Tibial artery (tissue), 4 donors: ENCODE measurements at regions of chr1 and their contacts with region 1.

Region 1: DNA sequence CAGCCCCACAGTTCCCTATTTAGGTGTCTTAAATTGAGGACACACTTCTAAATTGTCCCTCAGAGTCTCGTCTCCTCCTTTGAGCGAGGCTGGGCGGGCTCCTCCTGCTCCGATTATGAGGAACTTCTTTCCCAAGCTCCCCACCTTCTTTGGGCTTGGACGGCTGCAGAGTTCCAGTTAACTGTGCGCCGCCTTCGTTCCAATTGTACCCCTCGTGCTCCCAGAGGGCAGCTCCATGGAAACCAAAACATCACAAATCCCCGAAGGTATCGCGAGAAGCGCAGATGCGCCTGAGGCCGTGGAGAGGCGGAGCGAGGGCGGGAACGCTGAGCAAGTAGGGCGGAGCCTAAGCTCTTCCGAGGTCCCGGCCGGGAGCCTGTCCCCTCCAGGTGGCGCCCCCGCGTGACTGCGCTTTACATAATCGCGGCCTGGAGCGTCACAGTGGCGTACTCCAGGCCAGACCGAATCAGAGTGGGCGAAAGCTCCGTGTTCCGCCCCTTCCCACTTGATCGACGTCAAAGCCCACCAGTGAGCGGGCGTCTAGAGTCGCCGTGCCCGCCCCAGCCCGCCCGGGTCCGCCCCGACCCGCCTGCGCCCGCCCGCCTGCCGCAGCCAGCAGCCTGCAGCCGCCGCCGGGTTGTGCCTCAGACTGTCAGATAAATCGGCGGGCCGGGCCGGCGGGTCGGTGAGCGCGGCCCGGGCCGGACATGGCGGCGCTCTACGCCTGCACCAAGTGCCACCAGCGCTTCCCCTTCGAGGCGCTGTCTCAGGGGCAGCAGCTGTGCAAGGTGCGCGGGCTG is at the start of gene FAM76A:
- DNase-seq: peak; percentile 99 to 100
- H3K4me3 ChIP-seq: peak within 1 kb of the TSS; percentile 94 to 99
- H3K27ac ChIP-seq: peak within 1 kb of the TSS; percentile 93 to 97
- H3K4me1 ChIP-seq: peaks cover 5 to 14% (median 12%) of the 10 kb centered on the region in 4 donors
- H3K27me3 ChIP-seq: no peaks in the 10 kb centered on the region
- CTCF ChIP-seq: peak; percentile 18 to 42

Region 2: DNA sequence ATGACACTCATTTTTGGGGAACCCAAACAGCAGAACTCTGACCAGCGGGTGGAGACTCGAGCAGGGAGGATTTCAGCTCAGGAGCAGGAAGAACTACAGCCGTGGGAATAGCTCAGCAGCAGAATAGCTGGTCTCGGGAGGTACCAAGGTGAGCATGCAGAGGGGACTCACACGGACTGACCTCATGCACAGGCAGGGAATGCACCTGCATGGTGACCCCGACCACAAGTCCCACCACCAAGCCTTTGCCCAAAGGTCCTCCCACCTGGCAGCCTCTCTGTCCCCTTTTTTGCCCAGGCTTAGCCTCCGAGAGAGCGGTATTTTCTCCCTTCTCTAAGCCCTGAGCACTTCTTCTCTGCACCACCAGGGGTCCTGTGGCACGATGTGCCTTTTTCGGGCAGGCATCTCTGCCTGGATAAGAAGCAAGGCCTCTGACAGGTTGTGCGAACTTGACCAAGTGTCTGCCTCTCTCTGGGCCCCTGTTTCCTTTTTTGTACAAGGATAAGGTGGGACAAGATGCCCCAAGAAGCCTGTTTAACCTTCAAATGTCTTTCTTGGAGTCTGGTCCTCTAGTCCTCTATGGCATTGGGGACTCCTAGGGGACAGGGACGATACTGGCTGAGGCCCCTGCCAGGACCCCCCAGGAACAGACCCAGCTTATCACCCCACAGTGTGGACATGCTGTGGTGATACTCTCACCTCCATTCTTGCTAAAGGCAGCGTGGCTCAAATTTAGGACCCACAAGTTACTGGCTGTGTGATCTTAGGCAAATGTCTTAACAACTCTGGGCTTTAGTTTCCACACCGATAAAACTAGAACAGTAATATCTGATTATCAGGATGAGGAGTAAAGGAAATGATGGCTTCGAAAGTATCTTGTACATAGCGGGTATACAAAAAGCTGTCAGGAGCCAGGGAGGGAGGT is 81.6 kb before region 1 on chr1:
- intact Hi-C with region 1: no loop called
- DNase-seq: peak in 1 of 2 donors; percentile 54
- H3K4me3 ChIP-seq: no peak overlapping the region
- H3K27ac ChIP-seq: no peak overlapping the region
- H3K4me1 ChIP-seq: peaks cover 0 to 15% (median 6%) of the 10 kb centered on the region in 4 donors
- H3K27me3 ChIP-seq: no peaks in the 10 kb centered on the region
- CTCF ChIP-seq: peak; percentile 78 to 83

Region 3: GRCh38 chr1:27671964-27672749 is 53.4 kb before region 1 on chr1 and contains the start of gene IFI6:
- intact Hi-C with region 1: loop called (anchors 5 kb)
- DNase-seq: peak; percentile 90 to 95
- H3K4me3 ChIP-seq: peak within 1 kb of the TSS; percentile 48 to 61
- H3K27ac ChIP-seq: peak within 1 kb of the TSS; percentile 78 to 81
- H3K4me1 ChIP-seq: peaks cover 0 to 33% (median 17%) of the 10 kb centered on the region in 4 donors
- H3K27me3 ChIP-seq: no peaks in the 10 kb centered on the region
- CTCF ChIP-seq: peak; percentile 48 to 59

Region 4: DNA sequence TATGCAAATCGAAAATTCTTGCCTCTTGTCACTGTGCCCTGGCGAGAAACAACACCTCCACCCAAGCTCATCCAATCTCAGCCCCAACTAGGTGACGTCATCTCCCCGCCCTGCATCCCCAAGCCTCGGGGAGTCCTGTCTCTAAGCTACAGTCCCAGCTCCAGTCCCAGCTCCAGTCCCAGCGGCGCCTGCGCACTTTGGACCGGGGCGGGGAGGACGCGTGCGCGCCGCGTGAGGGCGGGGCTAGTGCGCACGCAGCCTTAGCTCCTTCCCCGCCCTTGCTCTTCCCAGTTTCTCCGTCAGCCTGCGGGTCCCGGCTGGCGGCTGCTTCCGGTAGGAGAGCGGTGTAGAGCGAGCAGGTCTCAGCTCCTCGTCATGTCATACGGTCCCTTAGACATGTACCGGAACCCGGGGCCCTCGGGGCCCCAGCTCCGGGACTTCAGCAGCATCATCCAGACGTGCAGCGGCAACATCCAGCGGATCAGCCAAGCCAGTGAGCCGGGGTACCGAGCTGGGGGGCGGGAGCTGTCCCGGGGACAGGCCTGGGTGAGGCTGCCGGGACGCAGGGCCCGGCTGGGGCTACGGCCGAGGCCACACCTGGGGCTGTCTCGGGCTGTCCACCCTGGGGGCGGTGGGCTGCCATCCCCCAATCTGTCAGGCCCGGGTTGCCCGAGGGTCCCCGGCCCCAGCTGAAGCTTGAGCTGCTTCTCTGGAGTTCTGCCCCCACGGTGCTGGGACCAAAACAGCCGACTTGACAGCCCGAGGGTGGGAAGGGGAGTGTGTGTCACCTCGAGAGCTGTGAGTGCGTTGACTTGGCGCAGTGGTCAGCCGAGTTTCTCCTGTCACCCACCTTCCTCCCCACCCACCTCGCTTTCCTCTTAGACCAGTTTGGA is 47.6 kb after region 1 on chr1 and contains the start of gene STX12:
- intact Hi-C with region 1: loop called (anchors 1 kb)
- DNase-seq: peak; percentile 99 to 100
- H3K4me3 ChIP-seq: peak within 1 kb of the TSS; percentile 75 to 82
- H3K27ac ChIP-seq: peak within 1 kb of the TSS; percentile 93 to 94
- H3K4me1 ChIP-seq: peaks cover 0 to 43% (median 14%) of the 10 kb centered on the region in 4 donors
- H3K27me3 ChIP-seq: no peaks in the 10 kb centered on the region
- CTCF ChIP-seq: no peak

Region 5: GRCh38 chr1:27821761-27822315 is 96.3 kb after region 1 on chr1:
- intact Hi-C with region 1: no loop called
- DNase-seq: no peak
- H3K4me3 ChIP-seq: no peak overlapping the region
- H3K27ac ChIP-seq: no peak overlapping the region
- H3K4me1 ChIP-seq: peaks cover 0 to 11% (median 7%) of the 10 kb centered on the region in 4 donors
- H3K27me3 ChIP-seq: no peaks in the 10 kb centered on the region
- CTCF ChIP-seq: no peak